PC-9 (cell line): ENCODE measurements at regions of chr1 and their contacts with region 1.

Region 1: GRCh38 chr1:221100611-221101010 is 221.4 kb downstream of the HLX start:
- DNase-seq: no peak
- H3K4me3 ChIP-seq: no peak overlapping the region
- H3K27ac ChIP-seq: peak overlapping the region; percentile 43; the same call in 1 of the 2 replicates
- H3K4me1 ChIP-seq: peaks cover 12% of the 10 kb centered on the region
- H3K27me3 ChIP-seq: no peaks in the 10 kb centered on the region
- CTCF ChIP-seq: no peak

Region 2: DNA sequence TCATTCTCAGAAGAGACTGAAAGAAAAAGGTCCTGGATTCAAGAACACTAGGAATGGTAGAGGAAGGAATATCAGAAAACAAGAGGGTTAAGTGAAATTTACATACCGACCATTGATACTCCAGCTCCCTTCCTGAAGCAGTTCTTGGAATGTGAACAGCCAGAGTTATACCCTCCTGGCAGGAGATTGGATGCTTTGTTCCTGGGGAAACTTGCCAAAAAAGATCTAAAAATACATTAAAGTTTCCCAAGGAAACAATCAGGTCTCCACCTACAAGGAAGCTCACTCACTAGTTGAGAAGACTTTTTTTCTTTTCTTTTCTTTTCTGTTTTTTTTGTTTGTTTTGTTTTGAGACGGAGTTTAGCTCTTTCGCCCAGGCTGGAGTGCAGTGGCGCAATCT is 130.3 kb before region 1 on chr1:
- CTCF ChIA-PET with region 1: no interaction called
- POLR2A ChIA-PET with region 1: no interaction called
- intact Hi-C with region 1: loop called (anchors 10 kb)
- DNase-seq: no peak
- H3K4me3 ChIP-seq: no peak overlapping the region
- H3K27ac ChIP-seq: no peak overlapping the region
- H3K4me1 ChIP-seq: peaks cover 9% of the 10 kb centered on the region; the same call in 1 of the 2 replicates
- H3K27me3 ChIP-seq: no peaks in the 10 kb centered on the region
- CTCF ChIP-seq: no peak

Region 3: DNA sequence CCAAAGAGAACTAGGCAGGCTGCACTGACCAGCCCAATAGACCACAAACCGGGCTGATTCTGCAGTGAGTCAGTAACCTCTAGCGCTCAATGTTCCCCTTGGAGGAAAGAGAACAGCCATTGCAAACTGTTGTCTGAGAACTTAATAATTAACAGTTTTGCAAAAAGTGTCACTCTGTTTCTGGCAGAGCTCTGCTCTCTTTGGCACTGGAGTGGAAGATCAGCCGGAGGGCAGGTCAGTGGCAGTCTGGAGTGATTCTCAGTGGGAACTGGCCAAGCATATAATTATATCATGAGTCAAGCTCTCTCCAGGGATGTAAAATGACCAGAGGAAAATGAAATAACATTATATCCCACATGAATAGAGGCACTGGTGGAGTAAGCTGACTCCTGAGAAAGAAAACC is 16.9 kb after region 1 on chr1:
- CTCF ChIA-PET with region 1: no interaction called
- POLR2A ChIA-PET with region 1: no interaction called
- intact Hi-C with region 1: loop called (anchors 2 kb)
- DNase-seq: peak; percentile 29 to 57
- H3K4me3 ChIP-seq: no peak overlapping the region
- H3K27ac ChIP-seq: 0 out of 2 replicates have a peak overlapping the region, but pooled peaks have one; percentile 41
- H3K4me1 ChIP-seq: peaks cover 21% of the 10 kb centered on the region
- H3K27me3 ChIP-seq: no peaks in the 10 kb centered on the region
- CTCF ChIP-seq: no peak